ENCODE measurements at regions of chr10 and their contacts with region 1.

Region 1: DNA sequence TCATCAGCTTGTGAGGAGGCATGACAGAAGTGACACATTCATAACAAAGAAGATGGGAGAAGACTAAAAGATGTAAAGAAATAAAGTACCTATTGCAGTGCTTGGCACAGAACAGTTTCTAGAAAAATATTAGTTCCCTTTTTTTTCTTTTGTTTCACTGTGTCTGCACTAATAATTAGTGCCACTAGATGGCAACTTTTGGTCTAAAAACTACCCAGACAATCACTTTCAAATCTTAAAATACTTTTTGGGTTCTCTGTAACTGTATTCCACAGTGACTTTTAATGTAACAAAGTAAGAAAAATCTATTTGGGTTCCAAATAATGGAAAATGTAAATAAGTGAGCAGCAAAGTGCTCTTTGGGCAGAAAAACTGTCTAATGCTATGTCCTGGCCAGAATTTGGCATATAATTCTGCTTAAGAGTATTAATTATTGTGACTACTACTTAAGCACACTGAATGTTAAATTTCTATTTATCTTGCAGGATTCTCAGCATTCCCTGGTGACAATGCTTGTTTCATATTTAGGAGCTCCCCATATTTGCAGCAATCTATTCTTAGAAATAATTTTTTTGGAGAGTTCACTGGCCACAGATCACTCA is 134.8 kb upstream of the KIF5B start:
- DNase-seq: no peak
- H3K4me3 ChIP-seq: no peak overlapping the region
- H3K27ac ChIP-seq: no peak overlapping the region
- H3K4me1 ChIP-seq: no peaks in the 10 kb centered on the region
- H3K27me3 ChIP-seq: no peaks in the 10 kb centered on the region
- CTCF ChIP-seq: peak; percentile 62 to 74 (median 69)

Region 2: DNA sequence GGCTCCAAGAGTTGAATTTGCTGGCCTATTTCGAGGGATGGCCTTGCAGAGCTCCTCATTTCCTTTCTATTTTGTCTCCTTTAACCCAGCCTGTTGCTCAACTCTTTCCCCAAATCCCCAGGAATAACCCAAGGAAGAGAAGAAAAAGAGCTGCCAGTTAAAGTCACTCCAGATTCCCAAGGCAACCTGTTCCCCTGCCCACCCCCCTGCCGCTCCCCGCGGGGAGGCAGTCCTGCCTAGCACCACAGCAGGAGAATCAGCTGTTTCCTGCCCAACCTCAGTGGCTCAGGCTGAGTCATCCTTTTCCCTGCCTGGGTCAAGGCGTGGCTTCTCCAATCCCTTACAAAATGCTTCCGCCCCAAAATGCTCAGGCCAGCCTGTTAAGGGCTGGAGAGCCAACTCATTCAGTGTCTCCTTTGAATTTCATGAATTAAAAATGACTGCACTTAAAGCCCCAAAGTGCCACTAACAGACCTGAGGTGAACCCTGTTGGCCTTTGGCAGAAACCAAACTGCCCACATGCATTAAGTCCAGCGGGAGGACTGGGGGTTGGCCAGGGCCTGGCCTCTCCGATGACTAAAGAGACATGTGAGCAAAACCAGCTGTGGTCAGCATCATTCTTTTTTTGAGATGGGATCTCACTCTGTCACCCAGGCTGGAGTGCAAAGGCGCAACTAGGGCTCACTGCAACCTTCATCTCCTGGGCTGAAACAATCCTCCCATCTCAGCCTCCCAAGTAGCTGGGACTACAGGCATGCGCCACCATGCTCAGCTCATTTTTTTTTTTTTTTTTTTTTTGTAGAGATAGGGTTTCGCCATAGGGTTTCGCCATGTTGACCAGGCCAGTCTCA is 51.5 kb before region 1 on chr10:
- intact Hi-C with region 1: loop called (anchors 5 kb)
- DNase-seq: peak; percentile 87 to 95
- H3K4me3 ChIP-seq: no peak overlapping the region
- H3K27ac ChIP-seq: peak overlapping the region; percentile 71 to 79
- H3K4me1 ChIP-seq: peaks cover 5 to 10% of the 10 kb centered on the region in 2 donors
- H3K27me3 ChIP-seq: no peaks in the 10 kb centered on the region
- CTCF ChIP-seq: peak in 2 of 3 experiments; percentile 27 to 59

Region 3: DNA sequence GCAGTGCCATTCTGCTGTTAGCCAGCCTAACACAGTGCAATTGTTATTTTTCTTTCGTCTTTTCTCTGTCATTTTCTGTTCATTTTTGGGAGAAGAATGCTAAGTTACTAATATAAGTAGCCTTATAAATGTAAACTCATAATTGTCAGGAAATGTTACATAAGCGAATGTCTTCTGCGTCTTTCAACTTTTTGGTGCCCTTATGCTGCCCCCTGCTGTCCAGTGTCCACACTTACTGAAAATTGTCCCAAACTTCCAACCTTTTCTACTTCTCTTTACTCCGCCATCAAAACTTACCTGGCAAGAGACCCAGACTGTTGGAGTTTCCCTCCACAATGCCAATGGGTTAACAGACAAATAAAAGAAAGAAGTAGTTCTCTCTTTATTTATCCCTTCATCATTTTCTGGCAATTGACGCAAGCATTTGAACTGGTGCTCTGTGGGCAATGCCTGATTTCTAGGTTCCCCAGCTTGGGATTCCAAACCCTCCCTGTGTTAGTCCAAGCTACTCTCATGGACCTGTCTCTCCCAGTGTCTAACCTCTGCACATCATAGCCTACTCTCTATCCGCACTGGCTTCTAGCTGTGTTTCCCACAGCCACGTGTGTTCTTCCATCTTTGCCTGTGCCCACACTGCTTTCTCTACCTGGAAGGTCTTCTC is 176.9 kb after region 1 on chr10:
- intact Hi-C with region 1: loop called (anchors 5 kb)
- DNase-seq: no peak
- H3K4me3 ChIP-seq: peak overlapping the region in 1 of 2 donors; percentile 24
- H3K27ac ChIP-seq: no peak overlapping the region
- H3K4me1 ChIP-seq: peaks cover 0 to 8% of the 10 kb centered on the region in 2 donors
- H3K27me3 ChIP-seq: no peaks in the 10 kb centered on the region
- CTCF ChIP-seq: peak; percentile 55 to 86 (median 65)